ENCODE measurements at regions of chr13 and their contacts with region 1.

Region 1: GRCh38 chr13:41652727-41653361 is 195.5 kb downstream of the RGCC start:
- DNase-seq: peak in 1 of 10 donors; percentile 11
- H3K4me3 ChIP-seq: no peak overlapping the region
- H3K27ac ChIP-seq: peak overlapping the region in 44 of 59 donors; percentile 1 to 77 (median 46)
- H3K27me3 ChIP-seq: no peaks in the 10 kb centered on the region
- CTCF ChIP-seq: peak; percentile 45 to 90 (median 78)

Region 2: GRCh38 chr13:41075034-41075433 is 577.8 kb before region 1 on chr13:
- intact Hi-C with region 1: no loop called
- DNase-seq: no peak
- H3K4me3 ChIP-seq: no peak overlapping the region
- H3K27ac ChIP-seq: peak overlapping the region in 1 of 59 donors; percentile 2
- H3K27me3 ChIP-seq: no peaks in the 10 kb centered on the region
- CTCF ChIP-seq: peak; percentile 43 to 80 (median 64)

Region 3: GRCh38 chr13:41145146-41145908 is 507.5 kb before region 1 on chr13:
- intact Hi-C with region 1: no loop called
- DNase-seq: no peak
- H3K4me3 ChIP-seq: no peak overlapping the region
- H3K27ac ChIP-seq: no peak overlapping the region
- H3K27me3 ChIP-seq: no peaks in the 10 kb centered on the region
- CTCF ChIP-seq: no peak

Region 4: DNA sequence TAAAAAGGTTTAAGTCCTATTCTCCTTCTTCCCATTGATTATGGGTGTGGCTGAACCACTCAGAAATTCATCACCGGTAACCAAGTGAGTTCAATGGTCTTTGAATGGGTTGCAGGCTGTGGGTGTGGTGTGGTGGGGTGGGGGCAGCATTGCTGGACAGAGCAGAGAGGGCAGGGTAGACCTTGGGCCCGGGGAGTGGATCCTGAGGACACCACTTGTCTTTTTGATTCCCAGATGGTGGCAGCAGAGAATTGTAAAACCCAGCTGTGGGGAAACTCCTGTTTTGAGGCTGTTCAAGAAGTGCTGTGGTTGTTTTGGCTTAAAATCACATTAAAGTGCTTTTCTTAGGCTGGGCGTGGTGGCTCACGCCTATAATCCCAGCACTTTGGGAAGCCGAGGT is 241.3 kb before region 1 on chr13:
- intact Hi-C with region 1: loop called (anchors 5 kb)
- DNase-seq: peak in 1 of 10 donors; percentile 41
- H3K4me3 ChIP-seq: no peak overlapping the region
- H3K27ac ChIP-seq: no peak overlapping the region
- H3K27me3 ChIP-seq: no peaks in the 10 kb centered on the region
- CTCF ChIP-seq: peak in 52 of 56 donors; percentile 19 to 69 (median 50)

Region 5: GRCh38 chr13:41456768-41457588 is 195.9 kb before region 1 on chr13 and contains the start of gene RGCC:
- intact Hi-C with region 1: loop called (anchors 5 kb)
- DNase-seq: peak; percentile 45 to 89 (median 85)
- H3K4me3 ChIP-seq: peak within 1 kb of the TSS; percentile 52 to 98 (median 86)
- H3K27ac ChIP-seq: peak within 1 kb of the TSS; percentile 16 to 96 (median 91)
- H3K27me3 ChIP-seq: peaks cover 0 to 6% (median 0%) of the 10 kb centered on the region in 45 donors
- CTCF ChIP-seq: peak in 6 of 56 donors; percentile 6 to 24 (median 12)
- total RNA-seq, gene RGCC: 33.3 to 301 (median 127) TPM

Region 6: DNA sequence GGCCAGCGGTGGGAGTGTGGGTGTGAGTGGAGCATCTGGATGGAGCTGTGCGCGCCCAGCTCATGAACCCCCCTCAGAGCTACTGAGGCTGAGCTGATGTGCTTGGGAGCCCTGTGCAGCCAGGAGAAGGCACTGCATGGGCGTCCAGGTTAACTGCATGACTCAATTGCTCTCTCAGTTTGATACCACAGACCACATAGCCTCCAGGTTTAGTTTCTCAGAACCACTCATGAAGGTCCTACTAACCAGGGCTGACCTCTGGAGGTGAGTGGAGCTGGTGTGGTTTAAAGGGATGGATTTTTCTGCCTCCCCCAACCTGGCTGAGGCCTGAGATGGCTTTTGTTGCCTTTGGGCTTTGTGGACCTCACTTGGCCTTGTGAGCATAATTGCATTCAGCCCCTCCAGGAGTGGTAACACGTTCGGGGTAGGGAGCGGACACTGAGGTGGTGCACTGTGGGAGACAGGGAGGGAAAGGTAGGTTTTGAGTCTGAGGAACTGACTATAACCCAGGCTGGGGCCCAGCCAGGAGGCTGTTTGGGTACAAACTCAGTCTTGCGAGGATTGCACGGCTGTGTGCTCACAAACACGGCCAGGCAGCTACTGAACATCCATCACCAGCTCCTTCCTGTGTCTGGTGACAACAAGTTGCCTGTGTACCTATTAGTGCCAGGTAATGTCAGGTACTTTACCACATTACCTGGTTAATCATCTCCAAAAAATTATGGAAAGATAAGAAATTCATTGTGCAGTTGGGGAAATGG is 98.0 kb before region 1 on chr13:
- intact Hi-C with region 1: loop called (anchors 5 kb)
- DNase-seq: no peak
- H3K4me3 ChIP-seq: no peak overlapping the region
- H3K27ac ChIP-seq: no peak overlapping the region
- H3K27me3 ChIP-seq: no peaks in the 10 kb centered on the region
- CTCF ChIP-seq: no peak

Region 7: GRCh38 chr13:41613984-41614661 is 38.7 kb before region 1 on chr13:
- intact Hi-C with region 1: loop called in 1 of 2 experiments (anchors 5 kb)
- DNase-seq: peak in 4 of 10 donors; percentile 15 to 47 (median 46)
- H3K4me3 ChIP-seq: no peak overlapping the region
- H3K27ac ChIP-seq: peak overlapping the region in 46 of 59 donors; percentile 1 to 76 (median 56)
- H3K27me3 ChIP-seq: no peaks in the 10 kb centered on the region
- CTCF ChIP-seq: peak in 1 of 56 donors; percentile 11